Mammary epithelial cell (primary cell): ENCODE measurements at regions of chr7 and their contacts with region 1.

Region 1: GRCh38 chr7:47405921-47406792 is 175.8 kb downstream of the TNS3 start:
- DNase-seq: peak; percentile 75
- H3K4me3 ChIP-seq: no peak overlapping the region
- H3K27ac ChIP-seq: no peak overlapping the region
- H3K4me1 ChIP-seq: peaks cover 41% of the 10 kb centered on the region
- H3K27me3 ChIP-seq: no peaks in the 10 kb centered on the region
- CTCF ChIP-seq: no peak

Region 2: GRCh38 chr7:47314728-47315607 is 91.2 kb before region 1 on chr7:
- CTCF ChIA-PET with region 1: no interaction called
- dilution Hi-C with region 1: loop called (anchors 5 kb)
- in situ Hi-C with region 1: no loop called
- intact Hi-C with region 1: no loop called
- DNase-seq: no peak
- H3K4me3 ChIP-seq: no peak overlapping the region
- H3K27ac ChIP-seq: no peak overlapping the region
- H3K4me1 ChIP-seq: no peaks in the 10 kb centered on the region
- H3K27me3 ChIP-seq: no peaks in the 10 kb centered on the region
- CTCF ChIP-seq: no peak

Region 3: GRCh38 chr7:47327698-47328391 is 78.3 kb before region 1 on chr7:
- CTCF ChIA-PET with region 1: no interaction called
- dilution Hi-C with region 1: no loop called
- in situ Hi-C with region 1: no loop called
- intact Hi-C with region 1: loop called (anchors 1 kb)
- DNase-seq: peak; percentile 62
- H3K4me3 ChIP-seq: peak overlapping the region; percentile 1 to 32 (median 27)
- H3K27ac ChIP-seq: peak overlapping the region; percentile 3
- H3K4me1 ChIP-seq: peaks cover 55% of the 10 kb centered on the region
- H3K27me3 ChIP-seq: no peaks in the 10 kb centered on the region
- CTCF ChIP-seq: no peak

Region 4: GRCh38 chr7:47418601-47419381 is 12.6 kb after region 1 on chr7:
- CTCF ChIA-PET with region 1: no interaction called
- dilution Hi-C with region 1: no loop called
- in situ Hi-C with region 1: no loop called
- intact Hi-C with region 1: loop called (anchors 1 kb)
- DNase-seq: peak; percentile 69
- H3K4me3 ChIP-seq: no peak overlapping the region
- H3K27ac ChIP-seq: no peak overlapping the region
- H3K4me1 ChIP-seq: no peaks in the 10 kb centered on the region
- H3K27me3 ChIP-seq: no peaks in the 10 kb centered on the region
- CTCF ChIP-seq: no peak